ENCODE measurements at regions of chr1 and their contacts with region 1.

Region 1: GRCh38 chr1:167135281-167135840 is 41.5 kb downstream of the STYXL2 start:
- DNase-seq: no peak
- H3K4me3 Mint-ChIP-seq: no peak overlapping the region
- H3K27ac Mint-ChIP-seq: no peak overlapping the region
- H3K4me1 Mint-ChIP-seq: no peaks in the 10 kb centered on the region
- H3K27me3 Mint-ChIP-seq: peaks cover 35% of the 10 kb centered on the region

Region 2: DNA sequence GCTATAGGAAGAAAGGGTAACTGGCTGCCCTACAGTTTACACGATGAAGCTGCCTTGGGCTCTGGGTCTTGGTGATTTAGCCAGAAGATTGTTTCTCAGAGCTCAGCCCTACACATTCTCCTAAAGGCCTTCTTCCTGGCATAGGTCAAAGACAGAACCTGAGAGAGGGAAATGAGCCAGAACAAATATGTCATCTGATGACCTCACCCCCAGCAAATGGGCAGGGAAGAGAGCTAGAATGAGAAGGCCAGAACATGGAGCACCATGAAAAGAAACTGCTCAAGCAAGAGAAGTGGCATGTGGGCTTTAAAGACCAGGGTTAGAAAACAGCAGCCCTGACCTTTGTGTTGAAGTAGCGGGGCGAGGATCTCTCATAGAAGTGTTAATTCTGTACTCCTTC is 154.5 kb before region 1 on chr1:
- CTCF ChIA-PET with region 1: no interaction called
- POLR2A ChIA-PET with region 1: interaction called, 11 read pairs
- DNase-seq: no peak
- H3K4me3 Mint-ChIP-seq: no peak overlapping the region
- H3K27ac Mint-ChIP-seq: no peak overlapping the region
- H3K4me1 Mint-ChIP-seq: peaks cover 8% of the 10 kb centered on the region
- H3K27me3 Mint-ChIP-seq: peaks cover 30% of the 10 kb centered on the region

Measured in activated CD4-positive, alpha-beta T cell treated with anti-CD3 and anti-CD28 coated beads, Interleukin-2, amount 10 ng/mL, durations not matched to agents 7 days and 5 days (primary cell).